Naive thymus-derived CD8-positive, alpha-beta T cell (primary cell): ENCODE measurements at regions of chr5 and their contacts with region 1.

Region 1: GRCh38 chr5:176361437-176362232 is at the start of gene KIAA1191:
- DNase-seq: peak; percentile 87 to 98 (median 92)
- ATAC-seq: peak; percentile 87 to 89
- H3K4me3 Mint-ChIP-seq: peak within 1 kb of the TSS; percentile 94 to 99 (median 97)
- H3K27ac Mint-ChIP-seq: peak within 1 kb of the TSS; percentile 91 to 99 (median 98)
- H3K4me1 Mint-ChIP-seq: peaks cover 15 to 57% (median 36%) of the 10 kb centered on the region in 4 donors
- H3K27me3 Mint-ChIP-seq: no peaks in the 10 kb centered on the region
- polyA plus RNA-seq, gene KIAA1191: 42.3 to 50.7 (median 50.5) TPM

Region 2: DNA sequence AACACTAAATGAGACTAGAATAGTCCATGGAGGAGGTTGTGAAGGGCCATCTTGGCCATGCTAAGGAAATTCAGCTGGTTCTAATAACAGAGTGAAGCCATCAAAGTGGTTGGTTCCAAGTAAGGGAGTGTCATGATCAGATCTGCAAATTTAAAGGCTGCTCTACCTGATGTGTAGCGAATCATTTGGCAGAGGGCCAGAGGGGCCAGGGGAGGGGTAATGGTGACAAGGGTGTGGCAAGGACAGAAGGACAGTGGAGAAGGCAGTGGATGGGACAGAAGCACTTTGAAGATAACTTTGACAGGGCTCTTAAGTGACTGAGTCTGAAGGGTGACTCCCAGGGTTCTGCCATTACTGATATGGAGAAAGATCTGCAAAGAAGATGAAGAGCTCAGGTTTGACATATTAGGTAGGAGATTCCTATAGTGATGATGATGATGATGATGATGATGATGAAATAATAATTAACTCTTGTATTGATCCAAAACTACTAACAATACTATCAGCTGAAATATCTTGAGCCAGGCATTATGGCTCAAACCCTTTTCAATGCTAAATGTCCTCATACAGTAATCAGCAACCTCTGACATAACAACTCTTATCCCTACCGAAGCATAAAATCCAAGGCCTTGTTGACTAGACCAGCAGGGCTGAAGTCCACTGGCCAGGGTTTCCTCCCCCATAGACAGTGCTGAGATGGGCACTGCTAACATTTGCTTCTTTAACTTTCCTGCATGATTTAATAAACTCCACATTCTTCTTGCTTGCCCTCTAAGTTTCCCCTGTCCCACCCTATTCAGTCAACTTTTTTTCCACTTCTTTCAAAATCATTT is 20.1 kb before region 1 on chr5:
- POLR2A ChIA-PET with region 1: no interaction called
- DNase-seq: no peak
- ATAC-seq: no peak
- H3K4me3 Mint-ChIP-seq: no peak overlapping the region
- H3K27ac Mint-ChIP-seq: peak overlapping the region in 8 of 10 donors; percentile 8 to 81 (median 60)
- H3K4me1 Mint-ChIP-seq: peaks cover 0 to 2% (median 0%) of the 10 kb centered on the region in 4 donors
- H3K27me3 Mint-ChIP-seq: no peaks in the 10 kb centered on the region

Region 3: DNA sequence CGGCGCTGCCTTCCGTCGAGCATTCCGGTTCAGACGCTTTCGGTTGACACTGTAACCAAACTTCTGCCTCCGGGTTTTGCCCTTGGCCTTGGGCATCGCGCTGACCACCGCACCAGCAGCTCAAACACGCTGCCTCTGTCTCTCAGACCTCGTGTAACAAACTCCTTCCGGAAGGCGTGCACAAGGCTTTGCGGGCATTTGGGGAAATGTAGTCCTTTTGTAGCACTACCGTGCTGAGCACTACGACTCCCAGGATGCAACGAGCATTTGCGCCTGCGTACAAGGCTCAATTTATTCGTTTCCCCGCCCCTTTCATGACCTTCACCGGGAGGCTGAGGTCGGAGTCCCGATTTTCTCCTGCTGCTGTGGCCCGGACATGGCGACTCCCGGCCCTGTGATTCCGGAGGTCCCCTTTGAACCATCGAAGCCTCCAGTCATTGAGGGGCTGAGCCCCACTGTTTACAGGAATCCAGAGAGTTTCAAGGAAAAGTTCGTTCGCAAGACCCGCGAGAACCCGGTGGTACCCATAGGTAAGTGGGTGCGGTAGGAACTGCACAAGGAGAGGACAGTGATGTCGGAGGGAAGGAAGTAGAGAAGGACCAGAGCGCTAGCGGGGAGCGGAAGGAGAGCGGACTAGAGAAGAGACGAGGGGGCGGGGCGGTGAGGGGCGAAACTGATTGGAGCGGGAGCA is 27.0 kb after region 1 on chr5 and contains the starts of genes HIGD2A and NOP16:
- POLR2A ChIA-PET with region 1: interaction called, 58 read pairs
- DNase-seq: peak; percentile 96 to 100 (median 98)
- ATAC-seq: peak; percentile 89 to 90
- H3K4me3 Mint-ChIP-seq: peak within 1 kb of the TSS; percentile 86 to 100 (median 99)
- H3K27ac Mint-ChIP-seq: peak within 1 kb of the TSS; percentile 95 to 100 (median 100)
- H3K4me1 Mint-ChIP-seq: peaks cover 17 to 42% (median 37%) of the 10 kb centered on the region in 4 donors
- H3K27me3 Mint-ChIP-seq: no peaks in the 10 kb centered on the region
- polyA plus RNA-seq, gene HIGD2A: 209 to 280 (median 250) TPM
- polyA plus RNA-seq, gene NOP16: 19.1 to 40.5 (median 22.8) TPM